Adrenal gland (tissue), 19 donors: ENCODE measurements at regions of chr14 and their contacts with region 1.

Region 1: GRCh38 chr14:38187589-38188018 is 20.1 kb upstream of the SSTR1 start:
- DNase-seq: no peak
- H3K4me3 ChIP-seq: no peak overlapping the region
- H3K27ac ChIP-seq: no peak overlapping the region
- H3K4me1 ChIP-seq: no peaks in the 10 kb centered on the region
- H3K27me3 ChIP-seq: no peaks in the 10 kb centered on the region
- CTCF ChIP-seq: no peak
- POLR2A ChIP-seq: no peak

Region 2: GRCh38 chr14:37890095-37890494 is 297.5 kb before region 1 on chr14:
- intact Hi-C with region 1: loop called in 1 of 2 experiments (anchors 10 kb)
- DNase-seq: no peak
- H3K4me3 ChIP-seq: no peak overlapping the region
- H3K27ac ChIP-seq: no peak overlapping the region
- H3K4me1 ChIP-seq: no peaks in the 10 kb centered on the region
- H3K27me3 ChIP-seq: no peaks in the 10 kb centered on the region
- CTCF ChIP-seq: no peak
- POLR2A ChIP-seq: no peak